Breast epithelium (tissue), 4 donors: ENCODE measurements at regions of chr16 and their contacts with region 1.

Region 1: GRCh38 chr16:83418565-83418964 is 389.2 kb upstream of the HSBP1 start:
- DNase-seq: no peak
- H3K4me3 ChIP-seq: no peak overlapping the region
- H3K27ac ChIP-seq: no peak overlapping the region
- H3K4me1 ChIP-seq: no peaks in the 10 kb centered on the region
- H3K27me3 ChIP-seq: no peaks in the 10 kb centered on the region
- CTCF ChIP-seq: no peak
- POLR2A ChIP-seq: no peak

Region 2: DNA sequence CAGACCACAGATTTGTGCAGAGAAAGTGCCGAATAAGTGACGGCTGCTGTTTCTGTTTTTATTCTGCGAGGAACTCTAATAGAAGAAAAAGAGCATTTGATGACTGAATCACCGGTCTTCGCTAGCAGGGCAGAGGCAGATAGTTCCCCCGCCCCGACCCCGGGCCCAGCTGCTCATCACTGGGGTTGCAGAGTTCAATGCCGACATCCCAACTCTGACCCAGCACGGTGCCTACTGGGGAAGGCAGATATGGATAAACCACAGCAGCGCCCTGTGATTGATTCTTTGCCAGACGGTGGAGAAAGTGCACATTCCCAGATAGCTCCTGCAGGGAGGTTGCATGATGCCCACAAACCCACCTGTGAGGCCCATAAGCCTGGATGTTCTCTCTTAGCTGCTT is 31.3 kb after region 1 on chr16:
- intact Hi-C with region 1: loop called (anchors 2 kb)
- DNase-seq: no peak
- H3K4me3 ChIP-seq: no peak overlapping the region
- H3K27ac ChIP-seq: no peak overlapping the region
- H3K4me1 ChIP-seq: no peaks in the 10 kb centered on the region
- H3K27me3 ChIP-seq: no peaks in the 10 kb centered on the region
- CTCF ChIP-seq: no peak
- POLR2A ChIP-seq: no peak

Region 3: GRCh38 chr16:83692224-83692623 is 273.7 kb after region 1 on chr16:
- intact Hi-C with region 1: loop called (anchors 5 kb)
- DNase-seq: no peak
- H3K4me3 ChIP-seq: no peak overlapping the region
- H3K27ac ChIP-seq: no peak overlapping the region
- H3K4me1 ChIP-seq: no peaks in the 10 kb centered on the region
- H3K27me3 ChIP-seq: no peaks in the 10 kb centered on the region
- CTCF ChIP-seq: no peak
- POLR2A ChIP-seq: no peak

Region 4: GRCh38 chr16:84277237-84277823 is 858.8 kb after region 1 on chr16:
- intact Hi-C with region 1: no loop called
- DNase-seq: no peak
- H3K4me3 ChIP-seq: no peak overlapping the region
- H3K27ac ChIP-seq: no peak overlapping the region
- H3K4me1 ChIP-seq: no peaks in the 10 kb centered on the region
- H3K27me3 ChIP-seq: no peaks in the 10 kb centered on the region
- CTCF ChIP-seq: peak; percentile 70 to 80 (median 78)
- POLR2A ChIP-seq: no peak